ENCODE measurements at regions of chr10 and their contacts with region 1.

Region 1: GRCh38 chr10:73167783-73168464 is at the starts of genes ECD and FAM149B1:
- DNase-seq: peak; percentile 95
- ATAC-seq: peak; percentile 98
- H3K4me3 Mint-ChIP-seq: peak within 1 kb of the TSS; percentile 100
- H3K27ac Mint-ChIP-seq: peak within 1 kb of the TSS; percentile 99
- H3K4me1 Mint-ChIP-seq: peaks cover 34% of the 10 kb centered on the region
- H3K27me3 Mint-ChIP-seq: no peaks in the 10 kb centered on the region
- CTCF ChIP-seq: no peak
- total RNA-seq, gene ECD: 31.8 and 35.0 TPM in 2 replicates
- total RNA-seq, gene FAM149B1: 11.4 and 16.0 TPM in 2 replicates

Region 2: GRCh38 chr10:72354478-72355213 is 813.3 kb before region 1 on chr10 and contains the start of gene DNAJB12:
- CTCF ChIA-PET with region 1: no interaction called
- POLR2A ChIA-PET with region 1: no interaction called
- intact Hi-C with region 1: loop called (anchors 1 kb)
- DNase-seq: peak; percentile 89
- ATAC-seq: peak; percentile 84
- H3K4me3 Mint-ChIP-seq: peak within 1 kb of the TSS; percentile 99
- H3K27ac Mint-ChIP-seq: peak within 1 kb of the TSS; percentile 99
- H3K4me1 Mint-ChIP-seq: peaks cover 35% of the 10 kb centered on the region
- H3K27me3 Mint-ChIP-seq: no peaks in the 10 kb centered on the region
- CTCF ChIP-seq: no peak
- total RNA-seq, gene DNAJB12: 39.0 and 39.9 TPM in 2 replicates

Region 3: DNA sequence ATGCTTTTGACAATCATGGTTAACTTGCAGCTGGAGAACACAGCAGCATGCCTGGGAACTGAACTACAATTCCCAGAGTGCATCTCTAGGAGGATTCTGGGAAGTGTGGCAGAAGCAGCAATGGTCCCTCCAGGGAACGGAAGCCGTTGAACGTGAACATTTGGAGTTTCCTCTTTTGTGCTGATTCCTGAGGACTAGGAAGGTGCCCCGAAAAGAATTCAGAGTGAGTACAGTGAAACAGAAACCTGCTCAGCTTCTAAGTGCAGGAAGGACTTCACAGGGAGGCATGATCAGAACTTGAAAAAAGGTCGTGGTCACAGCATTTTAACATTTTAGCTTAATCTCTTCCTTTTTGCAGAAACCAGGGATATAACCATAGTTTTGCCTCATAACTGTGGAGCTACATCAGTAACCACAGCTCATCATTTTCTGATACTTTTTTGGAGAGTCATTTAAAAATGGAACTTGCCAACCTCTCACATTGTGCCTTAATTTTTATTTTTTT is 57.5 kb before region 1 on chr10 and contains the start of gene NUDT13:
- CTCF ChIA-PET with region 1: no interaction called
- POLR2A ChIA-PET with region 1: no interaction called
- intact Hi-C with region 1: loop called (anchors 1 kb)
- DNase-seq: peak; percentile 20
- ATAC-seq: peak; percentile 92
- H3K4me3 Mint-ChIP-seq: peak within 1 kb of the TSS; percentile 90
- H3K27ac Mint-ChIP-seq: peak within 1 kb of the TSS; percentile 89
- H3K4me1 Mint-ChIP-seq: peaks cover 16% of the 10 kb centered on the region
- H3K27me3 Mint-ChIP-seq: no peaks in the 10 kb centered on the region
- CTCF ChIP-seq: no peak
- total RNA-seq, gene NUDT13: 3.5 and 4.6 TPM in 2 replicates

Region 4: DNA sequence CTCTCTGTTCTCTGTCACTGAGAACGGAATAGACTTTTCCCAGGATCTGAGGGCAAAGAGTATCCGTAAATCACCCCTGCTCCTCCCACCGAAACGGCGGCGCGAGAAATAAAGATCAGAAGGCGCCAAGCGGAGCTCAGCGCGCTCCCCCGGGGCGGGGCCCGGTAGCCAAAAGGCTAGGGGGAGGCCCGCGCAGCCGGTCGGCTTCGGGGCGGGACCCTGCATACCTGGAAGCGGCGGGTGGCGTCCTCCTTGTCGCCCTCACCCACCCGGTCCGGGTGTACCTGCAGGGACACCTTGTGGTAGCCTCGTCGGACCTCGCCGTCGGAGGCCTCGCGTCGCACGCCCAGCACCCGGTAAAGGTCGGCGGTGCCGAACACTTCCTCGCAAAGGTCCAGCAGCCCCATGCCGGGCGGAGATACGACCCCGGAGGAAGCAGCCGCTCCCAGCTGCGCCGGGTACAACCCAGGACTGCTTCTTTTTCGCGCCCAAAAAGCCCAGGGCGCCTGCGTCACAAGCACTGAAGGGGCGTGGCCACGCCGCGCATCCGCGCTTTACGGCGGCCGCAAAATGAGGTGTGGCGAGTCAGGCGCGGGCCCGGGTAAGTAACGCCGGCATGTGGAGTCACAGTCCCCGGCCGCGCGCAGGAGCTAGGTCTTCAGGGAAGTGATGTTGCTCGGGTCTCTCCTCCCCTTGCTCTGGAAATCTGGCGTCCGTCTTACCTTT is 79.0 kb after region 1 on chr10 and contains the start of gene DNAJC9:
- CTCF ChIA-PET with region 1: no interaction called
- POLR2A ChIA-PET with region 1: interaction called, 11 read pairs
- intact Hi-C with region 1: loop called (anchors 1 kb)
- DNase-seq: peak; percentile 99
- ATAC-seq: peak; percentile 84
- H3K4me3 Mint-ChIP-seq: peak within 1 kb of the TSS; percentile 93
- H3K27ac Mint-ChIP-seq: peak within 1 kb of the TSS; percentile 93
- H3K4me1 Mint-ChIP-seq: peaks cover 56% of the 10 kb centered on the region
- H3K27me3 Mint-ChIP-seq: no peaks in the 10 kb centered on the region
- CTCF ChIP-seq: no peak
- total RNA-seq, gene DNAJC9: 22.8 and 24.4 TPM in 2 replicates

Region 5: DNA sequence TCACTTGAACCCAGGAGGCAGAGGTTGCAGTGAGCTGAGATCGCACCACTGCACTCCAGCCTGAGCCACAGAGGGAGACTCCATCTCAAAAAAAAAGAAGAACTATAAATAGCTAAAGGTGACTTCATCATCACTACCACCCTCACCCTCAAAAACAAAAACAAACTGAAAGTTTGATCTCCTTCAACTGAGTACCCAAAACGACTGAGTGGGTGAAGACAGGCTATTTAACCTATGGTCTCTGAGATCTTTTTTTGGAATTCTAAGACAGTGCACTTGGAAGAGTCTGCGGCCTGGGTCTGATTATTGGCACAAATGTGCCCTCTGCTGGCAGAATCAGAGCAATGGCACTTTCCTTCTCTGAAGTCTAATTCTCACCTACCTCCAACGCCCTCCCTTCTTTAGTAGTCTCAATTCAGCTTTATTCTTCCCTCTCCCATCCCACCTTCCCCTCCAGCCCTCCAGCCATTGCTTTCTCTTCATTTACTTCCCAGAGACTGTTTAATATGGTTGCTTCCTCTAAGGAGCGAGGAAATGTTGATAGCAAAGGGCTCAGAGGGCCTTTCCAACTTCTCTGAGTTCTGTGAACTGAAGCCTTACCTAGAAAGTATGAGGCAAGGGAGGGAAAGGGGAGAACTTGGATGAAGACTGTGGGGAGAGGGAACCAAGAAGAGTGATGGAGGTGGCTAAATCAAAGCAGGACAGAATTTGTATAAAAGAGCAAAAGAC is 476.3 kb after region 1 on chr10:
- CTCF ChIA-PET with region 1: no interaction called
- POLR2A ChIA-PET with region 1: no interaction called
- intact Hi-C with region 1: loop called (anchors 5 kb)
- DNase-seq: no peak
- ATAC-seq: peak; percentile 69
- H3K4me3 Mint-ChIP-seq: peak overlapping the region; percentile 65
- H3K27ac Mint-ChIP-seq: peak overlapping the region; percentile 26
- H3K4me1 Mint-ChIP-seq: peaks cover 13% of the 10 kb centered on the region
- H3K27me3 Mint-ChIP-seq: peaks cover 4% of the 10 kb centered on the region
- CTCF ChIP-seq: peak; percentile 62

Measured in activated B cell treated with CpG ODN at 0.5 μM for 24 hours (primary cell).